Ovary (tissue), 10 donors: ENCODE measurements at regions of chr5 and their contacts with region 1.

Region 1: GRCh38 chr5:180950291-180950949 is 38.2 kb upstream of the BTNL3 start:
- DNase-seq: no peak
- H3K4me3 ChIP-seq: no peak overlapping the region
- H3K27ac ChIP-seq: no peak overlapping the region
- H3K4me1 ChIP-seq: no peaks in the 10 kb centered on the region
- H3K27me3 ChIP-seq: no peaks in the 10 kb centered on the region
- CTCF ChIP-seq: no peak
- EP300 ChIP-seq: no peak
- POLR2A ChIP-seq: no peak

Region 2: DNA sequence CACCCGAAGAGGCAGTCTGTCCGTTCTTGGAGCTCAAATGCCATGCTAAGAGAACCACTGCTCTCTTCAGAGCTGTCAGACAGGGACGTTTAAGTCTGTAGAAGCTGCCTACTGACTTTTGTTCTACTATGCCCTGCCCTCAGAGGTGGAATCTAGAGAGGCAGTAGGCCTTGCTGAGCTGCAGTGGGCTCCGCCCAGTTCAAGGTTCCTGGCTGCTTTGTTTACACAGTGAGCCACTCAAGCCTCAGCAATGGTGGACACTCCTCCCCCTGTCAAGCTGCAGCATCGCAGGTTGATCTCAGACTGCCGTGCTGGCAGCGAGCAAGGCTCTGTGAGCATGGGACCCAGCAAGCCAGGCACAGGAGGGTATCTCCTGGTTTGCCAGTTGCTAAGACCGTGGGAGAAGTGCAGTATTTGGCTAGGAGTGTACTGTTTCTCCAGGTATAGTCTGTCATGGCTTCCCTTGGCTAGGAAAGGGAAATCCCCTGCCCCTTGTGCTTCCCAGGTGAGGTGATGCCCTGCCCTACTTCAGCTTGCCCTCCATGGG is 64.5 kb before region 1 on chr5:
- intact Hi-C with region 1: no loop called
- DNase-seq: no peak
- H3K4me3 ChIP-seq: no peak overlapping the region
- H3K27ac ChIP-seq: no peak overlapping the region
- H3K4me1 ChIP-seq: no peaks in the 10 kb centered on the region
- H3K27me3 ChIP-seq: no peaks in the 10 kb centered on the region
- CTCF ChIP-seq: no peak
- EP300 ChIP-seq: no peak
- POLR2A ChIP-seq: no peak

Region 3: DNA sequence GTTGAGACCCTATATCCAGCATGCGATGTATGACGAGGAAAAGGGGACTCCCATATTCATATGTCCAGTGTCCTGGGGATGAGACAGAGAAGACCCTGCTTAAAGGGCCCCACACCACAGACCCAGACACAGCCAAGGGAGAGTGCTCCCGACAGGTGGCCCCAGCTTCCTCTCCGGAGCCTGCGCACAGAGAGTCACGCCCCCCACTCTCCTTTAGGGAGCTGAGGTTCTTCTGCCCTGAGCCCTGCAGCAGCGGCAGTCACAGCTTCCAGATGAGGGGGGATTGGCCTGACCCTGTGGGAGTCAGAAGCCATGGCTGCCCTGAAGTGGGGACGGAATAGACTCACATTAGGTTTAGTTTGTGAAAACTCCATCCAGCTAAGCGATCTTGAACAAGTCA is 55.4 kb after region 1 on chr5:
- intact Hi-C with region 1: loop called in 1 of 4 experiments (anchors 2 kb)
- DNase-seq: no peak
- H3K4me3 ChIP-seq: no peak overlapping the region
- H3K27ac ChIP-seq: no peak overlapping the region
- H3K4me1 ChIP-seq: no peaks in the 10 kb centered on the region
- H3K27me3 ChIP-seq: no peaks in the 10 kb centered on the region
- CTCF ChIP-seq: no peak
- EP300 ChIP-seq: no peak
- POLR2A ChIP-seq: no peak